Aorta (tissue), 5 donors: ENCODE measurements at regions of chr11 and their contacts with region 1.

Region 1: GRCh38 chr11:76734456-76735420 is 48.4 kb upstream of the TSKU start:
- DNase-seq: peak in 1 of 2 donors; percentile 44
- ATAC-seq: no peak
- H3K4me3 ChIP-seq: no peak overlapping the region
- H3K27ac ChIP-seq: no peak overlapping the region
- H3K4me1 ChIP-seq: no peaks in the 10 kb centered on the region
- H3K27me3 ChIP-seq: no peaks in the 10 kb centered on the region

Region 2: GRCh38 chr11:76799066-76799804 is 64.5 kb after region 1 on chr11:
- intact Hi-C with region 1: loop called (anchors 1 to 2 kb)
- DNase-seq: peak; percentile 90 to 96
- ATAC-seq: peak; percentile 93
- H3K4me3 ChIP-seq: no peak overlapping the region
- H3K27ac ChIP-seq: no peak overlapping the region
- H3K4me1 ChIP-seq: no peaks in the 10 kb centered on the region
- H3K27me3 ChIP-seq: no peaks in the 10 kb centered on the region

Region 3: GRCh38 chr11:76872959-76873827 is 138.5 kb after region 1 on chr11:
- intact Hi-C with region 1: no loop called
- DNase-seq: no peak
- ATAC-seq: no peak
- H3K4me3 ChIP-seq: no peak overlapping the region
- H3K27ac ChIP-seq: no peak overlapping the region
- H3K4me1 ChIP-seq: no peaks in the 10 kb centered on the region
- H3K27me3 ChIP-seq: no peaks in the 10 kb centered on the region

Region 4: DNA sequence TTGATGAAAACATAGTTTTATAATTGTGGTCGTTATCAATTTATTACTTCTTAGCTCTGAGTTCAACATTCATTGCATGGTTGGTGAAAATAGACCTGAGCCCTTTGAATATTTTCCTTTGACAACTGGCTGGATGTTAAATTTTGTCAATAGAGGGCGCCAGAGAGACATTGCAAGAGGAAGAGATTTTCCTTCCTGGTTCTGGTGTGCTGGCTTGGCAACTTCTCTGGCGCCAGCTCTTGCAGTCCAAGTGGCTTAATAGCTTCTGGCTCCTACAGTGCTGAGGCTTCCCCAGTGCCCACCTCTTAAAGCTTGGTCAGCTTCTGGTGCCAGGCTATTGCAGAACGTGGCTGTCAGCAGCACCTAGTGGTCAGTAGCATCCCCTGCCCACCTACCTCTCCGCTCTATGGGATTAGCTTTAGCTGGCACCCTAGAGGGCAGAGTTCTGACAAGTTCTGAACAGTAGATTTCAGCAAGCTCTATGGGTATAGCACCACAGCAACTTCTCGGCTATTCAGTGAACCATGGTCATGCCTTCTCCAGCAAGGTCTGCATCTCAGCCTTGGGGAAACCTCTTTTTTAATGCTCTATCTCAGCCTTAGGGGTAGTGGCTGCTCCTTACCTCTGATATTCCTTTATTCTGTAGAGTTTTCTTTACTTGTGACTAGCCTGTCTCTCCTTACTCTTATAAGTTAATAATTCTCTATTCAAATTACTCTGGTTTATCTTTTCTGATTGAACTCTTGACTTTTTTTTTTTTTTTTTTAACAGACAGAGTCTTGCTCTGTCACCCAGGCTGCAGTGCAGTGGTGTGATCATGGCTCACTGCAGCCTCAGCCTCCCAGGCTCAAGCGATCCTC is 185.4 kb after region 1 on chr11:
- intact Hi-C with region 1: loop called (anchors 5 kb)
- DNase-seq: peak; percentile 80 to 86
- ATAC-seq: peak; percentile 92
- H3K4me3 ChIP-seq: no peak overlapping the region
- H3K27ac ChIP-seq: no peak overlapping the region
- H3K4me1 ChIP-seq: no peaks in the 10 kb centered on the region
- H3K27me3 ChIP-seq: no peaks in the 10 kb centered on the region

Region 5: DNA sequence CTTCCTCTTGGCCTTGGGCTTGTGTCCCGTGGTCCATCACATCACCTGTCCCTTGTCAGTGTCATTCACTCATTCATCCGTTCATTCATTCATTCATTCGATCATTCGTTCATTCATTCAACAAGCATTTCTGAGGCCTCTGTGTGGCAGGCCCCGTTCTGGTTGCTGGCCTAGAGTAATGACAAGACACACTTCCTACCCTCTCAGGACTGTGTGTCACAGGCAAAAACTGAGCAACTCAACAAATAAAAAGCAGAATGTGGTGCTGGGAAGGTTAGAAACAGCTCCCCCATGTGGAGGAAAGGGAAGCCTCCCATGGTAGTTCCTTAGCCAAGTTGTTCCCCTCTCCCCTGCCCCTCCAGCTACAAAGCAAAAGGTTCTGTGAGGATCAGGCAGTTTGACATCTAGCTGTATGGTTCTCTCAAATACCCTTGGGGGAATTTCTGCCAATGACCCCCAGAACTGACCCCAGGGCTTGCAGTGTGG is 366.4 kb after region 1 on chr11:
- intact Hi-C with region 1: loop called in 1 of 2 experiments (anchors 10 kb)
- DNase-seq: no peak
- ATAC-seq: no peak
- H3K4me3 ChIP-seq: no peak overlapping the region
- H3K27ac ChIP-seq: no peak overlapping the region
- H3K4me1 ChIP-seq: no peaks in the 10 kb centered on the region
- H3K27me3 ChIP-seq: no peaks in the 10 kb centered on the region